Activated CD4-positive, alpha-beta memory T cell treated with anti-CD3 and anti-CD28 coated beads for 36 hours (primary cell): ENCODE measurements at regions of chr3 and their contacts with region 1.

Region 1: GRCh38 chr3:133573054-133573628 is 345 bp upstream of the CDV3 start:
- DNase-seq: peak; percentile 100
- H3K4me3 Mint-ChIP-seq: peak overlapping the region; percentile 79
- H3K27ac Mint-ChIP-seq: peak overlapping the region; percentile 98
- H3K4me1 Mint-ChIP-seq: peaks cover 53% of the 10 kb centered on the region
- H3K27me3 Mint-ChIP-seq: no peaks in the 10 kb centered on the region

Region 2: DNA sequence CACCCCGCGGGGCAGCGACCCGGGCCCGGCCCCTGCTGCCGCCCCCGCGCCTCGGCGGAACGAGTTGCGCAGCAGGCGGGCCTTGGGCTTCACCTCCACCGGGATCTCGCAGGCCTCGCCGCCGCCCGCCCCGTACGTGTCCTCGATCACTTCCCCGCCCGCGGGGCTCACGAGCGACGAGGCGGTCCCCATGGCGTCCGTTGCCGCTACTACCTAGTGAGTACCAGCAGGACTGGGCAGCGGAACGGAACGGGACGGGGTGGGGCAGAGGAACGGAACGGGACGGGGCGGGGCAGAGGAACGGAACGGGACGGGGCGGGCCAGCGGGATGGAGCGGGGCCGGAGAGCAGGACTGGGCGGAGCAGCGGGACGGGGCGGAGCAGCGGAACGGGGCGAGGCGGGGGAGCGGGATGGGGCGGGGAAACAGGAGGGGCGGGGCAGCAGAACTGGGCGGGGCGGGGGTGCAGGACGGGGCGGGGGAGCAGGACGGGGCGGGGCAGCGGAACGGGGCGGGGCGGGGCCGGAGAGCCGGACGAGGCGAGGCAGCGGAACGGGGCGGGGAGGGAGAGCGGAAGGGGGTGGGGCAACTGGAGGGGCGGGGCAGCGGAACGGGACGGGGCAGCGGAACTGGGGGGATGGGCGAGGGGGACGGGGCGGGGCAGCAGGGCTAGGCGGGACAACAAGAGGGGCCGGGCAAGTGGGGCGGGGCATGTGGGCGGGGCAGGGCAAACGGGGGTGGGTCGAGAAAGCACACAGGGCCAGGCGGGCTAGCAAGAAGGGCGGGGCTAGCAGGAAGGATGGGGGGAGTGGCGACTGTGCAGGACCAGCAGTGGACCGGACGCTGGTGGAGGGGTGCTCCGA is 850.7 kb before region 1 on chr3 and contains the start of gene NPHP3:
- CTCF ChIA-PET with region 1: interaction called, 6 read pairs
- POLR2A ChIA-PET with region 1: interaction called, 5 read pairs
- intact Hi-C with region 1: loop called (anchors 1 kb)
- DNase-seq: peak; percentile 98
- H3K4me3 Mint-ChIP-seq: peak within 1 kb of the TSS; percentile 84
- H3K27ac Mint-ChIP-seq: peak within 1 kb of the TSS; percentile 77
- H3K4me1 Mint-ChIP-seq: peaks cover 39% of the 10 kb centered on the region
- H3K27me3 Mint-ChIP-seq: no peaks in the 10 kb centered on the region
- total RNA-seq, gene NPHP3: 13.6 to 16.7 TPM

Region 3: DNA sequence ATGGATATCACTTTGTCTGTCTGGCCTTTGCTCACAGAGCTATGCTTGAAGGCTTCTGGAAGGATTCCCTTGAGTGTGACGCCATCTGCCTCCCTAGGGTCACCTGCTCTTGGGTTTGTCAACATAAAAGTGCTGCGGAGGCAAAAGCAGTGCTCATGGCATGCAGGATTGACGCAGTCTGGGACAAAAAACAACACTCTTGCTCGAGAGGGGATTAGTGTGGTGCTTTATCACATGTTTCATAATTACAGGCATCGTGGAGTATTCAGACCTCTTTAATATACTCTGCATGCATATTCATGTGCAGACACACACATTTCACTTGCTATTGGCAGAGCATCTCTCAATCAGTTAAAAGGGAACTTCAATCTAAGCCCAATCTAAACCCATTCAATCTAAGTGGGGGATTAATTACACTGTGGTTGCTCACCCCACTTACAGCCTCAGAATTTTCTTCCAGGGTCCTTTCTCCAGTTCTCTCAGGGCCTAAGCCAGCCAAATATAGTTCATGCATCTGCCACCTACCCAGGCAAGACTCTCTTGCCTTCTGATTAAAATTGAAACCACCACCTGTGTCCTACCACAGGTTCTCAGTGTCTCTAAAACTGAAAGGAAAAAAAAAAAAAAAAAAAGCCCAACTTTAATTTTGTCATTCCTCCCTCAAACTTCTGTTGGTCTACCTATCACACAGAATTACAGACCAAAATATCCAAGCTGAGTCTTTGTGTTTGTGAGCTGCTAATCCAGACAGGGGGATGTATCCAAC is 97.7 kb before region 1 on chr3:
- CTCF ChIA-PET with region 1: interaction called, 5 read pairs
- POLR2A ChIA-PET with region 1: interaction called, 8 read pairs
- intact Hi-C with region 1: loop called (anchors 1 kb)
- DNase-seq: peak; percentile 38
- H3K4me3 Mint-ChIP-seq: no peak overlapping the region
- H3K27ac Mint-ChIP-seq: peak overlapping the region; percentile 57
- H3K4me1 Mint-ChIP-seq: peaks cover 38% of the 10 kb centered on the region
- H3K27me3 Mint-ChIP-seq: no peaks in the 10 kb centered on the region

Region 4: GRCh38 chr3:133595341-133595740 is 22.2 kb after region 1 on chr3:
- CTCF ChIA-PET with region 1: interaction called, 7 read pairs
- POLR2A ChIA-PET with region 1: interaction called, 14 read pairs
- intact Hi-C with region 1: loop called (anchors 1 kb)
- DNase-seq: peak; percentile 41
- H3K4me3 Mint-ChIP-seq: no peak overlapping the region
- H3K27ac Mint-ChIP-seq: peak overlapping the region; percentile 23
- H3K4me1 Mint-ChIP-seq: peaks cover 28% of the 10 kb centered on the region
- H3K27me3 Mint-ChIP-seq: no peaks in the 10 kb centered on the region

Region 5: DNA sequence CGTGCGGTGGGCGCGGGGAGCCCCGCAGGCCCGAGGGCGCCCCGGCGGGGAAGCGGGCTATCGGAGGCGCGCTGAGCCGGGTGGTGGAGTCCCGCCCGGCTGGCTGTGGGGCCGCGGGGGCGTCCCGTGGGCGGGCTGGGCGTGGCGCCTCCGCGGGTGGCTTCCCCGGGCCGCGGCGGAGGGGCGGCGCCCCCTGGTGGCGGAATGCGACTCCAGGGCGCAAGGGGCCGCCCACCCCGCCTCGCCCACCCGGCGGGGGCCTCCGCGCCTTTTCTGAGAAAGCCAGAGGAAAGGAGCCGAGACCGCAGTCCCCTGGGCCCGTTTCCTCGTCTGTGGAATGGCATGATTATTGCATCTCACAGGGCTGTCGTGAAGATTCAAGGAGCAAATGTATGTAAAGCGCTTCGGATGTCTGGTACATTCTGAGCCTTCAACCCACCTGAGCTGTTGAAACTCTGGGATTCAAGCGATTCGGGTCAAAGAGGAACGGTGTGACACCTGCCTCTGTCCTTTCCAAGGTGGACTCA is 354.5 kb after region 1 on chr3:
- CTCF ChIA-PET with region 1: no interaction called
- POLR2A ChIA-PET with region 1: no interaction called
- intact Hi-C with region 1: loop called (anchors 10 kb)
- DNase-seq: peak; percentile 72
- H3K4me3 Mint-ChIP-seq: peak overlapping the region; percentile 38
- H3K27ac Mint-ChIP-seq: no peak overlapping the region
- H3K4me1 Mint-ChIP-seq: peaks cover 6% of the 10 kb centered on the region
- H3K27me3 Mint-ChIP-seq: peaks cover 10% of the 10 kb centered on the region

Region 6: GRCh38 chr3:134485718-134486576 is 912.8 kb after region 1 on chr3 and contains the starts of genes ANAPC13 and CEP63:
- CTCF ChIA-PET with region 1: no interaction called
- POLR2A ChIA-PET with region 1: no interaction called
- intact Hi-C with region 1: loop called (anchors 1 kb)
- DNase-seq: peak; percentile 95
- H3K4me3 Mint-ChIP-seq: peak within 1 kb of the TSS; percentile 87
- H3K27ac Mint-ChIP-seq: peak within 1 kb of the TSS; percentile 97
- H3K4me1 Mint-ChIP-seq: peaks cover 46% of the 10 kb centered on the region
- H3K27me3 Mint-ChIP-seq: no peaks in the 10 kb centered on the region
- total RNA-seq, gene ANAPC13: 30.1 to 33.1 TPM
- total RNA-seq, gene CEP63: 22.4 to 23.7 TPM